ENCODE measurements at regions of chr7 and their contacts with region 1.

Region 1: GRCh38 chr7:131383417-131384285 is 56.0 kb downstream of the MKLN1 start:
- DNase-seq: no peak
- ATAC-seq: no peak
- H3K4me3 ChIP-seq: no peak overlapping the region
- H3K27ac ChIP-seq: no peak overlapping the region
- H3K4me1 ChIP-seq: peaks cover 0 to 14% (median 6%) of the 10 kb centered on the region in 9 donors
- H3K27me3 ChIP-seq: no peaks in the 10 kb centered on the region
- CTCF ChIP-seq: no peak

Region 2: GRCh38 chr7:130277763-130278643 is 1105.6 kb before region 1 on chr7:
- intact Hi-C with region 1: loop called in 1 of 10 experiments (anchors 10 kb)
- DNase-seq: peak; percentile 38 to 65
- ATAC-seq: peak; percentile 69 to 89 (median 80)
- H3K4me3 ChIP-seq: no peak overlapping the region
- H3K27ac ChIP-seq: no peak overlapping the region
- H3K4me1 ChIP-seq: peaks cover 0 to 27% (median 3%) of the 10 kb centered on the region in 9 donors
- H3K27me3 ChIP-seq: peaks cover 0 to 28% (median 16%) of the 10 kb centered on the region in 7 donors
- CTCF ChIP-seq: peak; percentile 23 to 79 (median 65)

Region 3: DNA sequence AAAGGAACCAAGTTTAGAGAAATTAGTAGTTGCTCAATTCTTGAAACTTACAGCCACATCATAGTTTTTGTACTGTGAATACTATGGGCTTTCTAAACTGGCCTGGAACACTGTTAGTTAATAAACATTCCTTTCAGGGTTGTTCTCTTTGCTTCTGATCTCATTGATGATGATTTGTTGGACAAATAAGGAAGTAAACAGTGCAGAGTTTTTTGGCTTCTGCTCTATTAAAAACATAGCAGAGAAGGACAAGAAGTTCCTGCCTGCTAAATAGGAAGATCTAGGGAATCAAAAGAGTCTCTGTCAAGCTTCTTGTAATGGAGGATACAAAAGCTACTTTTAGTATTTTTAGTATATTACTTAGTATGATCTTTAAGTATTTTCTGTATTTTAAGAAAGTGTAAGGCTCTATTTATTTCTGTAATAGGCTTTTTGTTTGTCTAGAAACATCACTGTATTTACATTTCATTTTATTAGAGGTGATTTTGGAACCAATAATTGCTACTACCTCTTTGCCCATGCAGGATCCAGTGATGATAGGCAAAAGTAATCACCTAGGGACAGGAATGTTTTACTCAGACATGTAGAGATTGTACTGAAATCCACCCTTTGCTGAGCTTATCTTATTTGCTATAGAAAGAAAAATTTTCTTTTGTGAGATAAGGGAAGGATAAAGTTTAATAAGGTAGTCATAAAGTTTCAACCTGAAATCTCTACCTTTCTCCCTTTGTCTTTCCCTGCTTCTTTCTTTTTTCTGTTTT is 17.4 kb after region 1 on chr7:
- intact Hi-C with region 1: loop called in 1 of 10 experiments (anchors 2 kb)
- DNase-seq: no peak
- ATAC-seq: peak in 6 of 8 donors; percentile 39 to 91 (median 70)
- H3K4me3 ChIP-seq: no peak overlapping the region
- H3K27ac ChIP-seq: peak overlapping the region in 8 of 10 donors; percentile 3 to 48 (median 28)
- H3K4me1 ChIP-seq: peaks cover 0 to 31% (median 21%) of the 10 kb centered on the region in 9 donors
- H3K27me3 ChIP-seq: no peaks in the 10 kb centered on the region
- CTCF ChIP-seq: no peak

Region 4: GRCh38 chr7:131995328-131995727 is 611.7 kb after region 1 on chr7:
- intact Hi-C with region 1: no loop called
- DNase-seq: no peak
- ATAC-seq: no peak
- H3K4me3 ChIP-seq: no peak overlapping the region
- H3K27ac ChIP-seq: no peak overlapping the region
- H3K4me1 ChIP-seq: no peaks in the 10 kb centered on the region
- H3K27me3 ChIP-seq: peaks cover 0 to 1% (median 0%) of the 10 kb centered on the region in 7 donors
- CTCF ChIP-seq: no peak

Region 5: DNA sequence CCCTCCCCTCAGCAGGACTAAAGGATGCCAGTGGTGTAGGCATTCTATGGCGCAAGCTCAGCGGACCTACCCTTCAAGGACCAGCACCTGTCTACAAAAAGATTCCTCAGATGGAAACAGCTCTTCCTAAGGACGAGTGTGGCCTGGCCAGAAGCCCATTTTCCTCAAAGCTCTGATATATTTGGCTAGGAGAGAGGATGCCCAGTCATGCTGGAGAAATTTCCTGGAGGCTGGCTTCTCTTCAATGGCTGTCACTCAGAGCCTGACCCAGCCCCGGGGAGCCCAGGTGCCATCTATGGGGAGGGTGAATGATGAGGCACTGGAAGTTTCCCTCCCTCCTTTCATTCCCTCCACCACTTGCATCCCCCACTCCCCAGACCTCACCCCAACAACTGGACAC is 1081.1 kb after region 1 on chr7:
- intact Hi-C with region 1: loop called in 1 of 10 experiments (anchors 5 kb)
- DNase-seq: peak; percentile 38 to 70
- ATAC-seq: peak; percentile 75 to 93 (median 88)
- H3K4me3 ChIP-seq: no peak overlapping the region
- H3K27ac ChIP-seq: peak overlapping the region in 6 of 10 donors; percentile 48 to 83 (median 78)
- H3K4me1 ChIP-seq: peaks cover 0 to 32% (median 18%) of the 10 kb centered on the region in 9 donors
- H3K27me3 ChIP-seq: no peaks in the 10 kb centered on the region
- CTCF ChIP-seq: no peak